Ascending aorta (tissue), 2 donors: ENCODE measurements at regions of chr6 and their contacts with region 1.

Region 1: GRCh38 chr6:36442671-36443470 is at the starts of genes KCTD20 and PXT1:
- DNase-seq: peak; percentile 67 to 94
- H3K4me3 ChIP-seq: peak within 1 kb of the TSS; percentile 88 to 92
- H3K27ac ChIP-seq: peak within 1 kb of the TSS; percentile 96 to 97
- H3K4me1 ChIP-seq: peaks cover 0 to 25% of the 10 kb centered on the region in 2 donors
- H3K27me3 ChIP-seq: no peaks in the 10 kb centered on the region
- CTCF ChIP-seq: peak in 1 of 3 experiments; percentile 10
- total RNA-seq, gene KCTD20: 71.5 TPM
- total RNA-seq, gene PXT1: not detected

Region 2: GRCh38 chr6:36386495-36387439 is 56.1 kb before region 1 on chr6:
- intact Hi-C with region 1: loop called (anchors 5 kb)
- DNase-seq: peak in 1 of 2 donors; percentile 67
- H3K4me3 ChIP-seq: peak overlapping the region; percentile 66 to 78
- H3K27ac ChIP-seq: peak overlapping the region; percentile 61 to 75
- H3K4me1 ChIP-seq: peaks cover 5 to 35% of the 10 kb centered on the region in 2 donors
- H3K27me3 ChIP-seq: no peaks in the 10 kb centered on the region
- CTCF ChIP-seq: peak in 1 of 3 experiments; percentile 4

Region 3: GRCh38 chr6:36428911-36429310 is 14.0 kb before region 1 on chr6:
- intact Hi-C with region 1: no loop called
- DNase-seq: no peak
- H3K4me3 ChIP-seq: no peak overlapping the region
- H3K27ac ChIP-seq: no peak overlapping the region
- H3K4me1 ChIP-seq: no peaks in the 10 kb centered on the region
- H3K27me3 ChIP-seq: no peaks in the 10 kb centered on the region
- CTCF ChIP-seq: peak; percentile 19 to 28 (median 25)